Activated B cell treated with CpG ODN at 0.5 μM for 24 hours (primary cell): ENCODE measurements at regions of chr19 and their contacts with region 1.

Region 1: GRCh38 chr19:531009-531752 is 379 bp upstream of the CDC34 start:
- DNase-seq: peak; percentile 99
- ATAC-seq: peak; percentile 81
- H3K4me3 Mint-ChIP-seq: peak overlapping the region; percentile 85
- H3K27ac Mint-ChIP-seq: peak overlapping the region; percentile 77
- H3K4me1 Mint-ChIP-seq: peaks cover 18% of the 10 kb centered on the region
- H3K27me3 Mint-ChIP-seq: peaks cover 1% of the 10 kb centered on the region
- CTCF ChIP-seq: no peak

Region 2: DNA sequence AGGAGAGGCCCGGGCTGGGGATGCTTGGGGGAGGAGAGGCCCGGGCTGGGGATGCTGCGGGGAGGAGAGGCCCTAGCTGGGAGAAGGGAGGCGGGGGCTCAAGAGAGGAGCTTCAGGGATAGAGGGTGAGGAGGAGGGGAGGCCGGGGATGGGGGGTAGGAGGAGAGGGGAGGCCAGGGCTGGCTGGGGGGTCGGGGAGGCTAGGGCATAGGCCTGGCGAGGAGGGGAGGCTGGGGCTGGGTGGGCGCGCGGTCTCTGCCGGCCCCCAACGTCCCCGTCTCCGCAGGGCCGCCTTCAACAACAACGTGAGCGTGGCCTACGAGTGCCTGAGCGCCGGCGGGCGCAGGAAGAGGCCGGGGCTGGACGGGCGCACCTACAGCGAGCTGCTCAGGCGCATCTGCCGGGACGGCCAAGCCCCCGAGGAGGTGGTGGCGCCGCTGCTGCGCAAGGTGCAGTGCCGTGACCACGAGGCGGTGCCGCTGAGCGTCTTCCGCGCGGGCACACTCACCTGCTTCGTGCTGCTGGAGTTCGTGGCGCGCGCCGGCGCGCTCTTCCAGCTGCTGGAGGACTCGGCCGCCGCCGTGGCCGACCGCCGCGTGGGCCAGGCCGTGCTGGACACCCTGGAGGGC is 12.5 kb before region 1 on chr19:
- CTCF ChIA-PET with region 1: no interaction called
- POLR2A ChIA-PET with region 1: interaction called, 10 read pairs
- intact Hi-C with region 1: no loop called
- DNase-seq: no peak
- ATAC-seq: peak; percentile 74
- H3K4me3 Mint-ChIP-seq: no peak overlapping the region
- H3K27ac Mint-ChIP-seq: no peak overlapping the region
- H3K4me1 Mint-ChIP-seq: peaks cover 3% of the 10 kb centered on the region
- H3K27me3 Mint-ChIP-seq: peaks cover 1% of the 10 kb centered on the region
- CTCF ChIP-seq: no peak